ENCODE measurements at regions of chr4 and their contacts with region 1.

Region 1: DNA sequence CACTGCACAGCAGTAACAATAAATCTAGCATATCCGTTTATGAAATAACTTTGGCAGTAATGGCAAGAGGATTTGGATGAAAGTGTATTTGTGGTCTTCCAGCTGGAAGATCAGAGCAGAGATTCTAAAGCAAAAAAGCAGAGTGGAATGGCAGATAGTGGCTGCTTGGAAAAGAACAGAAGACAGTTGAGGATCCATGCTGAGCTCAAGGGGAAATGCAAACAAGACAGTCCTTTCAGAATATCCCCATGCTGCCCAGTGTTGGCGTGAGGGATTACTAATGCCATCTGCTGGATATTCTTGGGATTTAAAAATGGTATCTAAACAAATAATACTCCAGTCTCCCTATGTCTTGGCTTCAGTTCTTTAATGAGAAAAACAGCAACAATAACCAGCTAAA is 629.1 kb upstream of the ATOH1 start:
- DNase-seq: peak in 1 of 2 experiments; percentile 24
- H3K4me3 ChIP-seq: no peak overlapping the region
- H3K4me3 Mint-ChIP-seq: no peak overlapping the region
- H3K27ac Mint-ChIP-seq: no peak overlapping the region
- H3K4me1 ChIP-seq: no peaks in the 10 kb centered on the region
- H3K4me1 Mint-ChIP-seq: no peaks in the 10 kb centered on the region
- H3K27me3 ChIP-seq: no peaks in the 10 kb centered on the region
- H3K27me3 Mint-ChIP-seq: peaks cover 2% of the 10 kb centered on the region
- CTCF ChIP-seq: no peak

Region 2: DNA sequence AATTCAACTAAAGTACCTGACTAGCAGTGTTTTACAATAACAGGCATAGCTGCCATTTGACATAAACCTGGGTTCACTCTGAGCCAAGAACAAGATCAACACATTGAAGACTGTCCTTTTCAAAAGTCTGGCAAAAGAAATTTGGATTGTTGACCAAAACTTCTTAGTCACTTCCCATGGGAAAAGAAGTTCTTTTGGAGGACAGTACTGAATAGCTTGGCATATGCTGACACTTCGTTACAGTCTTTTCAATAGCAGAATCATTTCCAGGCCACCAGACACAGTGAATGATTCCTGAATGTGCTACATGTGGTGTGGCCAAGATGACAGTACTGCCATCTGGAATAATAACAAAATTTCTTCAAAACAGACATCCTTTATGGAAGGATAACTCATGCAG is 335.4 kb before region 1 on chr4:
- CTCF ChIA-PET with region 1: no interaction called
- POLR2A ChIA-PET with region 1: no interaction called
- intact Hi-C with region 1: loop called (anchors 1 kb)
- DNase-seq: no peak
- H3K4me3 ChIP-seq: no peak overlapping the region
- H3K4me3 Mint-ChIP-seq: no peak overlapping the region
- H3K27ac Mint-ChIP-seq: no peak overlapping the region
- H3K4me1 ChIP-seq: no peaks in the 10 kb centered on the region
- H3K4me1 Mint-ChIP-seq: no peaks in the 10 kb centered on the region
- H3K27me3 ChIP-seq: no peaks in the 10 kb centered on the region
- H3K27me3 Mint-ChIP-seq: peaks cover 5% of the 10 kb centered on the region
- CTCF ChIP-seq: no peak

Region 3: GRCh38 chr4:93157994-93158393 is 41.5 kb before region 1 on chr4:
- CTCF ChIA-PET with region 1: no interaction called
- POLR2A ChIA-PET with region 1: no interaction called
- intact Hi-C with region 1: loop called (anchors 1 kb)
- DNase-seq: no peak
- H3K4me3 ChIP-seq: no peak overlapping the region
- H3K4me3 Mint-ChIP-seq: no peak overlapping the region
- H3K27ac Mint-ChIP-seq: no peak overlapping the region
- H3K4me1 ChIP-seq: no peaks in the 10 kb centered on the region
- H3K4me1 Mint-ChIP-seq: no peaks in the 10 kb centered on the region
- H3K27me3 ChIP-seq: no peaks in the 10 kb centered on the region
- H3K27me3 Mint-ChIP-seq: no peaks in the 10 kb centered on the region
- CTCF ChIP-seq: peak; percentile 36 to 42

Region 4: DNA sequence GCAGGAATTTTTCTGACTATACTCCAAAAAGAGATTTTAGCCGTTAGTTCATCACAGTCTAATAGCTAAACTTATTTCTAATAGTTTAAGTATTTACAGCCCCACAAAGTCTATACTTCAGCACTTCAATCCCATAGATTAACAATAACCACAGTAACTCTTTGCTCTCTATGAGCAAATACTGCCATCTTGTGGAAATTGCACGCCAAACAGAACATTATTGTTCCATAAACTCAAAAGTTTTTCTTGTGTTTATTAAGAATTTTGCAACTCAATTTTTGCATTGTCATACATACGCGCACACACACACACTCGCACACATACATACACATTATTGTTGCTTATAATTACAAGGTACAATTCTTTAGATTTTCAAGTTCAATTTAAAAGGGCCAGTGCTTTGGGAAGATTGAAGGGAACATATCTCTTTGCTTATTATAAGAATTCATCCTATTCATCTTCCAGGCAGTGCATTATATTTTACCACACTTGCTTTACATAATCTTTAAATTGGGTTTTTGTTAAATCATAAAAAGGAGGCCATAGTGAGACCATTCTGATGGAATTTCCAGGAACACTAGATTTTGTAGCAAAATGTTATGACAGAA is 565.3 kb after region 1 on chr4:
- CTCF ChIA-PET with region 1: no interaction called
- POLR2A ChIA-PET with region 1: no interaction called
- intact Hi-C with region 1: loop called (anchors 1 kb)
- DNase-seq: peak in 1 of 2 experiments; percentile 29
- H3K4me3 ChIP-seq: no peak overlapping the region
- H3K4me3 Mint-ChIP-seq: no peak overlapping the region
- H3K27ac Mint-ChIP-seq: no peak overlapping the region
- H3K4me1 ChIP-seq: no peaks in the 10 kb centered on the region
- H3K4me1 Mint-ChIP-seq: no peaks in the 10 kb centered on the region
- H3K27me3 ChIP-seq: no peaks in the 10 kb centered on the region
- H3K27me3 Mint-ChIP-seq: peaks cover 15% of the 10 kb centered on the region
- CTCF ChIP-seq: peak; percentile 56 to 69

Measured in Caco-2 (cell line).